ENCODE measurements at regions of chr3 and their contacts with region 1.

Region 1: DNA sequence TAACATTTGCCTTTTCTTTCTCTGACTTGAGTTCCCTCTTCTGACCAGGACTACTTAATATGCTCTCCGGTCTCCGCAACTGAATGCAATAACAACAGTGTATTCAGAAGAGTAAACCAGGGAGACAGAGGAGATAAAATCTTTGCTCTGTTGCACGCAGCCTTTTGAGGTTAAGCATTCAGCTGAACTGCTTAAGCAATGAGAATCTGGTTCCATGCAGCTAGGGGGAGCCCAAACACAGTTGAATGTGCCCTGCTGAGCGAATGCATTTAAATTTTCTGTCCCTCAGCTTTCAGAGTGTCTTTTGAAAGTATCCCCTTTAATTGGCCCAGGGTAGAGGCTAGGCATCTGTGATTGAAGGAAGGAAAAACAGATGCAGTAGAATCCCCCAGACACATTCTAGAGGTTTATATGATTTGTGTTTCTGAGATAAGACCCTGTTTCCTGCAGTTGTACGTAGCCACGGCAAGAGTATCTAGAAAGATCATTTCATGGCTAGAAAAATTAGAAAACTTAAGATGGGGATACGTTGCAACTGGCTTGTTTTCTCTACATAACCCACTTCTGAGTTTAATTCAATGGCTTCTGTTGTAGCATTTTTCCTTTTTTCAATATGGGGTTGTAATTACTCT is 309.6 kb downstream of the TUSC7 start:
- DNase-seq: no peak

Region 2: GRCh38 chr3:117003501-117003900 is 15.7 kb before region 1 on chr3:
- intact Hi-C with region 1: no loop called
- DNase-seq: no peak

Region 3: DNA sequence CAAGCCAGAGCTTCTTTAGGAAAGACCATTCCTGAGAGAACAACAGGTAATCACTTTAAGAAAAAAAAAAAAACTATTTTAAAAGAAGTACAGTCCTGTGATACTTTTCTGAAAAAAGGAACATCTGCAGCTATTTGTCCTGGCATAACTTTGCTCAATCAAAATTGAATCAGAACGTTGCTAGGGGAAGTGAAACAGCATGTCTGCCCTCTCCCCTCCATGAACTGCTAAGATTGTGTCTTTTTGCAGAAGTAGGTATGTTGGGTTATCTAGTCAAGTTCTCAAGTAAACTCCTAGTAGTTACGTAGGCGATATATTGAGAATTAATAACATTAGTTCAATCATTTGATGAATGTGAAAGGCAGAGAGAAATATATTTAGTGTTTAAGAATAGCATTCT is 703.7 kb after region 1 on chr3:
- intact Hi-C with region 1: loop called in 1 of 2 experiments (anchors 10 kb)
- DNase-seq: no peak